ENCODE measurements at regions of chr9 and their contacts with region 1.

Region 1: DNA sequence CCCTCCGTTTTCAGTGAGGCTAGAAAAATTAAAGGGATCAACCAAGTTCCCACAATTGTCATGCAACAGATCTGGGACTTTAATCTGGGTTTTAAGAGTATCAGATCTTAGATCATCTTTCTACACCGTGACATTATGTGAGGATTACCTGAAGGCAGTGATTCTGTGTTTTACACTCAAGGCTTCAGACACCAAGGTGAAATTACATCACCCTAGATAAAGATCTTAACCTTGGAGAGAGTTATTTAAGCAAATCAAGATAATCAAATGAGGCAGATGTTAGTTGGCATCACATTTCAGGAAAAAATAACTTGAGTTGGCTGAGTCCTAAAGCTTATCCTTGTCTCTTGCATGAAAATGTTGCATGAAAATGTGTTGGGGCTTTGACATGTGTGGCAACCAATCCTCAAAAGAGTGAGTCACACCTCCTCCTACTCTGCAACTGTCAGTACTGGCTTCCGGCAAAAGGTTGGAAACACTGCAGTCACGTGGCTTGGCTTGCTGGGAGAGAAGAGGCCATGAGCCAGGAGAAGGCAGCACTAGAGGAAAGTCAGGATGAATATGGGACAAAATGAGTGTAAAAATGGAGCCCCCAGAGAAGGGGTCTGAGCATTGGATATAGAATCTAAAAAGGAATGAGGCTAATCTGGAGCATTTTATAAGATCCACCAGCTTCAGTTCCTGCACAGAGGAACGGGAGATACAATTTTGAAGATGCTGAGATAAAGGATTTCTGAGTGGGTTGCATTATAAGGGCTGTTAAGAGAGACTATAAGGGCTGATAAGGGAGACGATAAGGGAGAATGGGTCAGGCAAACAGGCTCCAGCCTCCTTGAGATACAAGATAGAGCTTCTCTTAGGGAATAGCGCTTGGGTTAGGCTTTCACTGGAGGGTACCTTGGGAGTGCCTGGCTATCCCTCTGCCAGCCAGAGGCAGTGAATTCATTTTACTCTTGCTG is 43.0 kb downstream of the SPATA31D1 start:
- DNase-seq: peak; percentile 67
- H3K27ac ChIP-seq: no peak overlapping the region
- CTCF ChIP-seq: no peak

Region 2: DNA sequence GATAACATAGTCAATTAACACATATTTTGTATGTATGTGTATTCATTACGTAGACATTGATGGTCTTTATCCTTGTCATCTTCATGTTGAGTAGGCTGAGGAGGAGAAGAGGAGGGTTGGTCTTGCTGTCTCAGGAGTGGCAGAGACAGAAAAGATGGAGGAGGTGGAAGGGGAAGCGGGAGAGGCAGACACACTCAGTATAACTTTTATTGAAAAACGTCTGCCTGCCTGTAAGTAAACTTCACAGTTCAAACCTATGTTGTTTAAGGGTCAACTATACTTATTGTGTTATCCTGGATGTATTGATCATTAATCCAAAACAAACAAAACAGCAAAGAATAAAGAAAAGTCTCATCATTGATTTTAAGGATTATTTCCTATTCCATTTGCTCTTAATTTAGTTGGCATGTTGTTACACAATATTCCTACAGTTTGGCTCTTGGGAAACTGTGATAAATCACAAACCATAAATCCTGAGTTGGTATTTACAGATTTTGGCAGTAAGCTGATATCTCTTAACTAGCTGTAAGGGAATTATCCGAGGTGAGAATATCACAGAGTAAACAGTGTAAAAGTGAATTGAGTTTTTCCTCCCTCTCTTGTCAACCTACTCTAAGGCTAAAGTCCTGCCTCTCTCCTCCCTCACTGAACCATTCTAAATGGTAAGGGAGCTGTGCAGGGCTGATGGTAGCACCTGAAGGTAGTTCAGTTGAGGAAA is 444.1 kb after region 1 on chr9:
- CTCF ChIA-PET with region 1: no interaction called
- POLR2A ChIA-PET with region 1: no interaction called
- DNase-seq: no peak
- H3K27ac ChIP-seq: no peak overlapping the region
- CTCF ChIP-seq: no peak

Region 3: GRCh38 chr9:82613498-82613897 is 581.9 kb after region 1 on chr9:
- CTCF ChIA-PET with region 1: interaction called, 10 read pairs
- POLR2A ChIA-PET with region 1: no interaction called
- DNase-seq: no peak
- H3K27ac ChIP-seq: no peak overlapping the region
- CTCF ChIP-seq: no peak

Measured in RWPE1 (cell line).